ENCODE measurements at regions of chr1 and their contacts with region 1.

Region 1: GRCh38 chr1:155172732-155173477 is at the start of gene KRTCAP2:
- H3K4me3 ChIP-seq: peak within 1 kb of the TSS; percentile 70
- H3K27ac ChIP-seq: peak within 1 kb of the TSS; percentile 52; the same call in 1 of the 2 replicates
- H3K4me1 ChIP-seq: no peaks in the 10 kb centered on the region
- CTCF ChIP-seq: peak; percentile 98

Region 2: GRCh38 chr1:154863315-154864174 is 309.4 kb before region 1 on chr1:
- CTCF ChIA-PET with region 1: no interaction called
- POLR2A ChIA-PET with region 1: no interaction called
- H3K4me3 ChIP-seq: no peak overlapping the region
- H3K27ac ChIP-seq: no peak overlapping the region
- H3K4me1 ChIP-seq: no peaks in the 10 kb centered on the region
- CTCF ChIP-seq: peak; percentile 41

Region 3: GRCh38 chr1:155084722-155085503 is 88.0 kb before region 1 on chr1:
- CTCF ChIA-PET with region 1: interaction called, 439 read pairs
- POLR2A ChIA-PET with region 1: interaction called, 9 read pairs
- H3K4me3 ChIP-seq: peak overlapping the region; percentile 78
- H3K27ac ChIP-seq: peak overlapping the region; percentile 61; the same call in 1 of the 2 replicates
- H3K4me1 ChIP-seq: peaks cover 10% of the 10 kb centered on the region
- CTCF ChIP-seq: peak; percentile 97

Region 4: DNA sequence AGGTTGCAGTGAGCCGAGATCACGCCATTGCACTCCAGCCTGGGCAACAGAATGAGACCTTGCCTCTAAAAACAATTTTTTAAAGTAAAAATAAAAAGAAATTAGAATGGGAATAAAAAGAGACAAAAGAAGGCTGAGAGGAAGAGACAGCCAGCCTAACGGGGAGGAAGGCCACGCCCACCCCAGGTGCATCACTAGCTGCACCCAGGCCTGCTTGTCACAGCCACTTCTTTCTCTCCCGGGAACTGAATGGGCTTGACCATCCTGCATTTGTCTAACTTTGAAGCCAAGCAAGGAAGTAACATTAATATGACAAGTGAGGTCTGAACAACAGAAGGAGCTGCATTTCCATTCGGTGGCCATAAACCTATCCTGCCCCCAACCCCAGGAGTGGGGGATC is 66.1 kb before region 1 on chr1:
- CTCF ChIA-PET with region 1: interaction called, 10 read pairs
- POLR2A ChIA-PET with region 1: no interaction called
- H3K4me3 ChIP-seq: no peak overlapping the region
- H3K27ac ChIP-seq: no peak overlapping the region
- H3K4me1 ChIP-seq: 0 out of 2 replicates have a peak, but pooled peaks cover 3% of the 10 kb centered on the region
- CTCF ChIP-seq: no peak

Region 5: GRCh38 chr1:155135415-155136028 is 37.4 kb before region 1 on chr1 and contains the start of gene SLC50A1:
- CTCF ChIA-PET with region 1: interaction called, 17 read pairs
- POLR2A ChIA-PET with region 1: interaction called, 17 read pairs
- H3K4me3 ChIP-seq: peak within 1 kb of the TSS; percentile 58
- H3K27ac ChIP-seq: peak within 1 kb of the TSS; percentile 88
- H3K4me1 ChIP-seq: no peaks in the 10 kb centered on the region
- CTCF ChIP-seq: peak; percentile 45; the same call in 1 of the 2 replicates

Region 6: DNA sequence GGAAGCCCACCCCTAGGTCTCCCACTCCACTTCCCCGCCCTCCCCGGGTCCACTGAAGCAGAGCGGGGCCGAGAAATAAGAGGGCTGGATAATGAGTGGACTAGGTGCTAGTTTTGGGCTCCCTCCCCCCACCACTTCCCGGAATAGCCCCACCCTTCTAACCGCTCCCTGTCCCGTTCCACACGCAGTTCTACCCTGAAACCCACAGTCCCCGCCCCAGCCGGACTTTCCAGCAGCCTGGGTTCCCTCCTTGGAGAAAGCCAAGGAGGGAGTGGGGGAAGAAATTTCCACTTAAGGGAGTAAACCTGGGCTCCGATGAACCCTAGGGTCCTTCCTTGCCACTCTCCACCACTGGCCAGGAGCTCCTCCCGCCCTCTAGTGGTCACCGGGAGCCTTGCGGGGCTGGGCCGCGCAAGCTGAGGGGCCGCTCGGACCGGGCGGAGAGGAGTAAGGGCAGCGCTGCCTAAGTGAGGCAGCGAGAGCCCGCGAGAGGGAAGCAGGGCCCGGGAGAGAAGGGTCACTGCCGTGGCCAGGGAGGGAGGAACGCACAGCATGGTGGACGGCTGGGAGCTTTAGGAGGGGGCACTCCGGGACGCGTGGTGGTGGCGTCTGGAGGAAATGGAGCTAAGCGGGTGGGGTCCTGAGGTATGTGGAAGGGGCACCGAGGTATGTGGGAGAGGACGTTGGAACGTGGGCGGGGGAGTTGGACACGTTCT is 20.5 kb after region 1 on chr1:
- CTCF ChIA-PET with region 1: interaction called, 60 read pairs
- POLR2A ChIA-PET with region 1: interaction called, 11 read pairs
- H3K4me3 ChIP-seq: peak overlapping the region; percentile 40
- H3K27ac ChIP-seq: peak overlapping the region; percentile 42; the same call in 1 of the 2 replicates
- H3K4me1 ChIP-seq: peaks cover 3% of the 10 kb centered on the region; the same call in 1 of the 2 replicates
- CTCF ChIP-seq: peak; percentile 98

Region 7: GRCh38 chr1:155424091-155424490 is 251.2 kb after region 1 on chr1:
- CTCF ChIA-PET with region 1: no interaction called
- POLR2A ChIA-PET with region 1: no interaction called
- H3K4me3 ChIP-seq: no peak overlapping the region
- H3K27ac ChIP-seq: no peak overlapping the region
- H3K4me1 ChIP-seq: no peaks in the 10 kb centered on the region
- CTCF ChIP-seq: no peak

Region 8: GRCh38 chr1:155437405-155437804 is 264.5 kb after region 1 on chr1:
- CTCF ChIA-PET with region 1: no interaction called
- POLR2A ChIA-PET with region 1: no interaction called
- H3K4me3 ChIP-seq: no peak overlapping the region
- H3K27ac ChIP-seq: no peak overlapping the region
- H3K4me1 ChIP-seq: peaks cover 14% of the 10 kb centered on the region; the same call in 1 of the 2 replicates
- CTCF ChIP-seq: no peak